ENCODE measurements at regions of chr2 and their contacts with region 1.

Region 1: DNA sequence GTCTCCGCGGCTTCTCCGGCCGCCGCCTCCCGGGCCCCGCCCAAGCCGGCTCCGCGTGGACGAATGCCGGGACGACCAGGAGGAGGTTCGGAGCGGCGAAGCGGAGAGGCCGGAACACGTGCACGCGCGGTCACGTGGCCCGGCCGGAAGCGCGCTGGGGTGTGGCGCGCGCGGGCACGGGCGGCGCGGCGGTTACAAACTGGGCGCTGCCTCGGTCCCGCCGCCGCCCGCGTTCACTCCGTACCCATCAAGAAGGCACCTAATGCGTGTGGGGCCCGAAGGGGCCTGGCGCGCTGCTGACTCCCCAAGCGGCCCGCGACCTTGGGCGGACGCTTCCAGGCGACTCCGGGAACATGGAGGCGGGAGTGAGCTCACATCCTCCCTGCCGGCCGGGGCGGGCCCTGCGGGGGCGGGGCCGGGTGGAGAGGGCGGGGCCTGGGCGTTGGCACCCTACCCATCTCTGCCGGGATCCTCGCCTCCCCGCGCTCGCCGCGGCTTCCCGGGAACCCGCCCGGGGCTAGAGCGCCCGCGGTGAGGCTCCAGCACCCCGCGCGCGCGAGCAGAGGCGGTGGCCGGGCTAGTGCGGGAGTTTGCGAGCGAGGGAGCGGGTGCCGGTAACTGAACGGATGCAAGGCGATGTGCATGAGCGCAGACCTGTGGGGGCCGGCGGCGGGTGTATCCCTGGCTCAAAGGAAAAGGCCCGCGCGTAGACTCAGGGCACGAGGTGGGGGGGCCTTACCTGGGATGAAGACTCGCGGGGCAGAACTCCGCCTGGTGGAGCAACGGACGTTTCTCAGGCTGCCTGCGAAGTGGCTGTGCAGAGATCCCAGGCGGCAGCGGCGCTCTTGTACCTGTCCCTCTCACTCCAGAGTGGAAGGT is at the start of gene TMEM185B:
- DNase-seq: peak; percentile 78
- H3K4me3 ChIP-seq: peak within 1 kb of the TSS; percentile 47 to 61 (median 57)
- H3K27ac ChIP-seq: peak within 1 kb of the TSS; percentile 78
- H3K4me1 ChIP-seq: peaks cover 17% of the 10 kb centered on the region
- H3K27me3 ChIP-seq: peaks cover 0 to 3% of the 10 kb centered on the region in 2 experiments
- CTCF ChIP-seq: peak; percentile 24 to 55
- POLR2A ChIP-seq: peak; percentile 72
- total RNA-seq, gene TMEM185B: 23.9 and 29.9 TPM in 2 replicates

Region 2: DNA sequence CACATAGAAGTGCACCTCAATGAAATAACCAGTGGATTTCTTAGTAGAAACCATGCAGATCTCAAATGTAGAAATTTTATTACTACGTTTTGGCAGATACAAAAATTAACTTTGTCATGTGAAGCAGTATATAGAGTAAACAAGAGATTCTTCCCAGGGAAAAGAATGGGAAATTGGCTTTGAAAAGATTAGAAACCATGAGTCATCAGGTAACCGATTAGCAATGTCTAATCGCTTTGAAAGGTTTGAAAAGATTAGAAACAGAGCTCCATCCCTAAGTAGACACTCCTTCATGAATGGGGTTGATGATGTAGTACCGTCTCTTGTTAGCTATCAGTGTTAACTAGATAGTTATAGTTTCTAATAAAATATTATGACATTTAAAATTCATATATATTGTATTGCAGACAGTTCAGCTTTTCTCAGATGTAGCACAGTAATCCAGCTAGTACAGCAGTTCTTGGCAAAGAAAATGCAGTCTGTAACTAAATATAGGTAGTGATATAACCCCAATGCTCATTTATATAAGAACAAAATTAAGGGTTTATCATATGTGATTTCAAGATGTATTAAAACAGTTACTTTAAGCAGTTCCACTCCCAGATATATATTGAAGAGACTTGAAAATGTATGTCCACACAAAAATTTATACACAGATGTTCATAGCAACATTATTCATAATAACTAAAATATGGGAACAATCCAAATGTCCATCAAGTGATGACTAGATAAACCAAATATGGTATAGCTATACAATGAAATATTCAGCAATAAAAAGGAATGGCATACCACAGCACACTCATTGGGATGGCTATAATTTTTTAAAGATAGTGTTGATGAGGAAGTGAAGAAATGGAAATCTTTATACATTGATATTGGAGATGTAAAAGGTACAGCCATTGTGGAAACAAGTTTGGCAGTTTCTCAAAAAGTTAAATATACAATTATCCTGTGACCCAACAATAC is 349.6 kb before region 1 on chr2:
- CTCF ChIA-PET with region 1: no interaction called
- POLR2A ChIA-PET with region 1: no interaction called
- dilution Hi-C with region 1: no loop called
- intact Hi-C with region 1: no loop called
- DNase-seq: no peak
- H3K4me3 ChIP-seq: no peak overlapping the region
- H3K27ac ChIP-seq: no peak overlapping the region
- H3K4me1 ChIP-seq: no peaks in the 10 kb centered on the region
- H3K27me3 ChIP-seq: no peaks in the 10 kb centered on the region
- CTCF ChIP-seq: no peak
- POLR2A ChIP-seq: no peak

Region 3: DNA sequence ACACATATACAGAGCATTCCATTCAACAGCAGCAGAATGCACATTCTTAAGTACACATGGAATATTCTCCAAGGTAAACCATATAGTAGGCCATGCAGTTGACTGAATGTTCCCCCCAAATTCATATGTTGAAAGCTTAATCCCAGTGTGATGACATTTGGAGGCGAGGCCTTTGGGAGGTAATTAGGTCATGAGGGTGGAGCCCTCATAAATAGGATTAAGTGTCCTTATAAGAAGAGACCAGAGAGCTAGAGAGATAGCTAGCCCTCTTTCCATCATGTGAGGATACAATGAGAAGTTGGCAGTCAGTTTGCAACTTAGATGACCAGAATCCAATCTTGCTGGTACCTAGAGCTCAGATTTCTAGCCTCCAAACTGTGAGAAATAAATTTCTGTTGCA is 27.7 kb before region 1 on chr2:
- CTCF ChIA-PET with region 1: no interaction called
- POLR2A ChIA-PET with region 1: no interaction called
- dilution Hi-C with region 1: no loop called
- intact Hi-C with region 1: no loop called
- DNase-seq: no peak
- H3K4me3 ChIP-seq: no peak overlapping the region
- H3K27ac ChIP-seq: no peak overlapping the region
- H3K4me1 ChIP-seq: no peaks in the 10 kb centered on the region
- H3K27me3 ChIP-seq: peaks cover 5 to 12% of the 10 kb centered on the region in 2 experiments
- CTCF ChIP-seq: no peak
- POLR2A ChIP-seq: no peak

Region 4: DNA sequence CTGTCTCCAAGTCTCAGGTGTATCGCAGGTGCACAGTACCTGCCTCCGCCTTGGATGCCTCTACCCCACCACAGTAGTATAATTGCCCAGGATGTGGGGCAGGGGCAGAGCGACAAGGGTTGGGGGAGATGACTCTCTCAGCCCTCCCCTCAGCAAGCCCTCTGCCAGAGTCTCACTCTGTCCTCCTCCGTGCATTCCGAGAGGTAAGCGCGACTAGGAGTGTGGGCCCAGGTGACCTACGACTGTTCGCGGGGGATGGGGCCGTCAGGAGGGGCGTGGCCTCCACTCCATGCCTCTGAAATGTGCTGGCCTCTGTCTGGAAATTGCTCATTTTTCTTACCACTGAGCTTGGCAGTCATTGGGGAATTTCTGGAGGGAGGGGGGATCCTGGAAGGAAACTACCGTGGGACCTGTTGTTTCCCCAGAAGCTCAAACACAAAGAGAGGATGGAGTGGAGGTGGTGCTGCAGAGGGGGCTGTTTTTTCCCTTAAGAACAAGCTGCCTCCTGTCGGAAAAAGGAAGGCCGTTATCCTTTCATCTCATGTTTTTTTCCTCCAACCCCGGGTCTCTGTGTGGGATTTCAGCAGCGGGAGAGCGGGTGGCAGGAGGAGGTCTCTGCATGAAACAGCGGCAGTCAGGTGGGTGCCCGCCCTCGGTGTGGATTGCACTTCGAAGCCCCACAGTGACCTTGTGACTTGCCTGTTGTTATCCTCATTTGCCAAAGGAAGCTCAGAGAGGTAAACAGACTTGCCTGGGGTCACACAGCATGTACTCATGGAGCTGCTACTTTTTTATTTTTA is 16.4 kb after region 1 on chr2:
- CTCF ChIA-PET with region 1: interaction called, 10 read pairs
- POLR2A ChIA-PET with region 1: interaction called, 15 read pairs
- dilution Hi-C with region 1: no loop called
- intact Hi-C with region 1: loop called (anchors 1 kb)
- DNase-seq: peak; percentile 99
- H3K4me3 ChIP-seq: no peak overlapping the region
- H3K27ac ChIP-seq: peak overlapping the region; percentile 37
- H3K4me1 ChIP-seq: peaks cover 34% of the 10 kb centered on the region
- H3K27me3 ChIP-seq: no peaks in the 10 kb centered on the region
- CTCF ChIP-seq: peak in 1 of 2 donors; percentile 4
- POLR2A ChIP-seq: peak; percentile 57

Region 5: DNA sequence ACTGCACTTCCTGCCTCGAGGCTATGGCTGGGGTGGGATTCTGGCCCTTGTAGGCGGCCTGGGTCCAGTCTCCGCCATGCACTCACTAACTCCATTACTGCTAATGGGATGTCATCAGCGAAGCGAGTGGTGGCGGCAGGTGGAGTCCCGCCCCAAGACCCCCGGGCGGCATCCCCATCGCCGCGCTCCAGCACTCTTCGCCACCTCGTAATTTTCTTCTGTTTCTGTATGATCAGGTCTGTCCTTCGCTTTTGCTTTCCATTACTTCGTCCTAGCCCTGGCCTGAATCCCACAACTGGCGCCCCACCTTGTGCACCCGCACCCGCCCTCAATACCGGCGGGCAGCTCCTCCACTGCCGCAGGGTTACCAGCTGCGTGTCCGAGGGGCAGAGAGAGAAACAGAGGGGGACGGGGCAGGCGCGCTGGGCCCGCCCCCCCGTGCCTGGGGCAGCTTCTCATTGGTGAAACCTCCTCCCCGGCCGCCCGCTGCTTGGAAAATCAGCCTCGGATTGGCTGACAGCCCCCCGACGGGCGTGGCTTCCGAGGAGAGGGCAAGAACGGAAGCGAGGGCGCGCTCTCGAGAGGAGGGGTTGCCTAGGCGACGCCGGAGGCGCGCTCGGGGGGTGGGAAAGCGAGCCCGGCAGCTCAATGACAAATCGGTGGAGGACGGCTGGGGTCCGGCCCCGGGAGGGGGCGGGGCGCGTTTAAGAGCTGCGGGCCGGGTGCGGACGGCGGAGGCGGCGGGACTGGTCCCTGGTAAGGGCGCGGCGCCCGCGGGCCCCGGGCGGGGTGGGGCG is 29.1 kb after region 1 on chr2 and contains the start of gene RALB:
- CTCF ChIA-PET with region 1: interaction called, 17 read pairs
- POLR2A ChIA-PET with region 1: interaction called, 8 read pairs
- dilution Hi-C with region 1: no loop called
- intact Hi-C with region 1: loop called (anchors 1 kb)
- DNase-seq: peak; percentile 100
- H3K4me3 ChIP-seq: peak within 1 kb of the TSS; percentile 47 to 83 (median 67)
- H3K27ac ChIP-seq: peak within 1 kb of the TSS; percentile 58
- H3K4me1 ChIP-seq: peaks cover 49% of the 10 kb centered on the region
- H3K27me3 ChIP-seq: no peaks in the 10 kb centered on the region
- CTCF ChIP-seq: no peak
- POLR2A ChIP-seq: peak; percentile 70
- total RNA-seq, gene RALB: 106 and 115 TPM in 2 replicates

Region 6: DNA sequence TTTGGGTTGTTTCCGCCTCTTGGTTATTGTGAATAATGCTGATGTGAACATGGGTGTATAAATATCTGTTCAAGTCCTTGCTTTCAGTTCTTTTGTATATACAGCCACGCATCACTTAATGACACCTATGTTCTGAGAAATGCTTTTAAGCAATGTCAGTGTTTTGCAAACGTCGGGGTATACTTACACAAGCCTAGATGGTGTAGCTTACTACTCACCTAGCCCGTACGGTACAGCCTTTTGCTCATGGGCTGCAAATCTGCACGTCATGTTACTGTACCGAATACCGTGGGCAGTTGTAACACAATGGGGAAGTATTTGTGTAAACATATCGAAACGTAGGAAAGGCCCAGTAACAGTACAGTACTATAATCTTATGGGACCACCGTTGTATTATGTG is 41.7 kb after region 1 on chr2:
- CTCF ChIA-PET with region 1: no interaction called
- POLR2A ChIA-PET with region 1: no interaction called
- dilution Hi-C with region 1: no loop called
- intact Hi-C with region 1: loop called (anchors 5 kb)
- DNase-seq: peak; percentile 45
- H3K4me3 ChIP-seq: no peak overlapping the region
- H3K27ac ChIP-seq: peak overlapping the region; percentile 15
- H3K4me1 ChIP-seq: peaks cover 52% of the 10 kb centered on the region
- H3K27me3 ChIP-seq: no peaks in the 10 kb centered on the region
- CTCF ChIP-seq: no peak
- POLR2A ChIP-seq: no peak

Region 7: DNA sequence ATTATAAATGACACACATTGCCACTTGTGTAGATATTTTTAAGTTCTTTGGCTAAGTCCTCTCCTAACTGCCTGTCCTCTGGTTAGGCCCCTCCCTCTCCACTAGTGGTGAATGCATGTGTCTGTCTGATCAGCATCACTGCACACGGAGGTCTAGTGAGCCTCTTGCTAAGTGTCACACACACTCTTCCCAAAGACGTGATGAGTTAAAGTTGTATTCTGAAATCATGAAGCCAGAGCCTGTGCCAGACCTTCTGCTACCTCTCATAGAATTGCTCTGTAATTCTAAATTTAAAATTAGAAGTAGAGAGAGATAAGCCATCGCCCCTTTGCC is 70.7 kb after region 1 on chr2:
- CTCF ChIA-PET with region 1: interaction called, 4 read pairs
- POLR2A ChIA-PET with region 1: no interaction called
- dilution Hi-C with region 1: no loop called
- intact Hi-C with region 1: loop called (anchors 5 kb)
- DNase-seq: no peak
- H3K4me3 ChIP-seq: no peak overlapping the region
- H3K27ac ChIP-seq: no peak overlapping the region
- H3K4me1 ChIP-seq: peaks cover 14% of the 10 kb centered on the region
- H3K27me3 ChIP-seq: no peaks in the 10 kb centered on the region
- CTCF ChIP-seq: no peak
- POLR2A ChIP-seq: no peak

Region 8: DNA sequence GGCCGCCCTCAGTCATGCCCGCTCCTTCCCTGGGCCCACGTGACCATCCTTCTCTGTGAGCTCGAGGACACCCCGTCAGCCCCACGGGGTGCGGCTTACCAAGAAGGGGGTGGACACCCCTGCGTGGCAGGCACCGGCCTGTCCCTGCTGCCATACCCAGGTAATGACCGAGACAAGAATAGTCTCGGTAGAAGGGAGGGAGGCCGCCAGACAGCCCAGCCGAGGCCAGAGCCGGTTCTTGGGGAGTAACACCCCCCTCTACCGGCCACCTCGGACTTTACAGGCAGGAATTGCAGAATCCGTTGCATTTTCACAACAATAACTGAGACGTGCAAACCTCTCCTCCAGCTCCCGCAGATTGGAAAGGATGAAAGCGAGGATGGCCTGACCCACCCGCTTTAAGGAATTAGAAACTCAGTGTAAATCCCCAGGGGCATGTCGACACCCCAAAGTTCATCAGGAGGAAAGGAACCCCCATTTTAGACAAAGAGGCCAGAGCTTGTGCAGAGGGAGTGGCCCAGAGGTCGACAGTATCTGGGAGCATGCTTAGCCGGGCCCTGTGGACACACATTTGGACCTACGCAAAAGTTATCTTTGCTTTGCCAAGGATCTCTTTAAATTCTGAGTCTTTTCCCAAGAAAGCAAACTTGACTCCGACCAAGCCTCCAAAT is 452.3 kb after region 1 on chr2:
- CTCF ChIA-PET with region 1: no interaction called
- POLR2A ChIA-PET with region 1: no interaction called
- dilution Hi-C with region 1: no loop called
- intact Hi-C with region 1: no loop called
- DNase-seq: peak; percentile 43
- H3K4me3 ChIP-seq: no peak overlapping the region
- H3K27ac ChIP-seq: no peak overlapping the region
- H3K4me1 ChIP-seq: no peaks in the 10 kb centered on the region
- H3K27me3 ChIP-seq: peaks cover 9 to 12% of the 10 kb centered on the region in 2 experiments
- CTCF ChIP-seq: peak; percentile 71 to 75
- POLR2A ChIP-seq: no peak